Activated CD8-positive, alpha-beta T cell treated with anti-CD3 and anti-CD28 coated beads, Interleukin-2, amount 10 ng/mL, durations not matched to agents 7 days and 5 days (primary cell): ENCODE measurements at regions of chr3 and their contacts with region 1.

Region 1: DNA sequence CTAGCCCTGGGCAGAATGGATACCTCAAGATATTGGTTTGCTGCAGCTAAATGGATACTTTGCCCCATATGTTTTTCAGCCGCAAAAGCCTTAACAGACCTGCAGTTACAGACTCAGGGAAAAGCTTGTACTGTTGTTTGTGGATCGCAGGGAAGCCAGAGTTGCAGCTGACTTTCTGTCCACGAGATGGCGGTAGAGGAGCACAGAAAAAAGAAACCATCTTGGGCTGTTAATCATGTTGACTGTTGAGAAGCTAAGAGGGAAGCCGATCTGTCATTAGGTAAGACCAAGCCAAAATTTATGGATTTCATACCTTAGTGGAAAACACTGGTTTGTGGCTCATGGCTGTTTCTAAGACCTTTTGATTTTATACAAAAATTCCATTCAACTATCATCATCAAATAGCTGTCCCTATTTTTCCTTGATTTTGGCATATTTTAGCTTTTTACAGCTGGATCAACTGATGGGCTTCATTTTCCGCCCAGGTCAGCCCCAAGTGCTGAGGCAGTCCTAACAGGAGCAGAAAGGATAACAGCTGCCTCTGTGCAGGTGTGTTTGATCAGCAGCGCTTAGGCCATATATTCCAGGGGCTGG is 205.7 kb upstream of the ZPLD1 start:
- DNase-seq: peak; percentile 81
- ATAC-seq: peak; percentile 73
- H3K4me3 Mint-ChIP-seq: no peak overlapping the region
- H3K27ac Mint-ChIP-seq: no peak overlapping the region
- H3K4me1 Mint-ChIP-seq: peaks cover 14% of the 10 kb centered on the region
- H3K27me3 Mint-ChIP-seq: peaks cover 18% of the 10 kb centered on the region

Region 2: GRCh38 chr3:101809178-101810021 is 419.8 kb before region 1 on chr3:
- CTCF ChIA-PET with region 1: interaction called, 230 read pairs
- POLR2A ChIA-PET with region 1: interaction called, 4 read pairs
- DNase-seq: peak; percentile 60
- ATAC-seq: peak; percentile 74
- H3K4me3 Mint-ChIP-seq: peak overlapping the region; percentile 16
- H3K27ac Mint-ChIP-seq: peak overlapping the region; percentile 50
- H3K4me1 Mint-ChIP-seq: peaks cover 52% of the 10 kb centered on the region
- H3K27me3 Mint-ChIP-seq: no peaks in the 10 kb centered on the region

Region 3: DNA sequence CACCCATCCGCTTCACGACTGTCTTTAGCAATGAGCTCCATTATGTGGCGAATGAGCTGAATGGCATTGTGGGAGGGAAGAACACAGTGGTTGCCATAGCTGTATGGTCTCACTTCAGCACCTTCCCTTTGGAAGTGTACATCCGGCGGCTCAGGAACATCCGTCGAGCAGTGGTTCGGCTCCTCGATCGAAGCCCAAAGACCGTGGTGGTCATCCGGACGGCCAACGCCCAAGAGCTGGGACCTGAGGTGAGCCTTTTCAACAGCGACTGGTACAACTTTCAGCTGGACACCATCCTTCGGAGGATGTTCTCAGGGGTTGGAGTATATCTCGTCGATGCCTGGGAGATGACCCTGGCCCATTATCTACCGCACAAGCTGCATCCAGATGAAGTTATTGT is 407.7 kb before region 1 on chr3:
- CTCF ChIA-PET with region 1: interaction called, 29 read pairs
- POLR2A ChIA-PET with region 1: interaction called, 3 read pairs
- DNase-seq: no peak
- ATAC-seq: no peak
- H3K4me3 Mint-ChIP-seq: no peak overlapping the region
- H3K27ac Mint-ChIP-seq: no peak overlapping the region
- H3K4me1 Mint-ChIP-seq: peaks cover 13% of the 10 kb centered on the region
- H3K27me3 Mint-ChIP-seq: no peaks in the 10 kb centered on the region

Region 4: GRCh38 chr3:101849051-101849720 is 380.0 kb before region 1 on chr3 and contains the start of gene NFKBIZ:
- CTCF ChIA-PET with region 1: interaction called, 26 read pairs
- POLR2A ChIA-PET with region 1: interaction called, 9 read pairs
- DNase-seq: peak; percentile 94
- ATAC-seq: peak; percentile 84
- H3K4me3 Mint-ChIP-seq: peak within 1 kb of the TSS; percentile 95
- H3K27ac Mint-ChIP-seq: peak within 1 kb of the TSS; percentile 97
- H3K4me1 Mint-ChIP-seq: peaks cover 40% of the 10 kb centered on the region
- H3K27me3 Mint-ChIP-seq: no peaks in the 10 kb centered on the region
- total RNA-seq, gene NFKBIZ: 45.3 to 48.1 TPM

Region 5: GRCh38 chr3:101936419-101937356 is 292.5 kb before region 1 on chr3:
- CTCF ChIA-PET with region 1: interaction called, 12 read pairs
- POLR2A ChIA-PET with region 1: no interaction called
- DNase-seq: no peak
- ATAC-seq: peak; percentile 91
- H3K4me3 Mint-ChIP-seq: peak overlapping the region; percentile 32
- H3K27ac Mint-ChIP-seq: peak overlapping the region; percentile 77
- H3K4me1 Mint-ChIP-seq: peaks cover 38% of the 10 kb centered on the region
- H3K27me3 Mint-ChIP-seq: no peaks in the 10 kb centered on the region

Region 6: GRCh38 chr3:102299125-102299877 is 70.1 kb after region 1 on chr3:
- CTCF ChIA-PET with region 1: no interaction called
- POLR2A ChIA-PET with region 1: no interaction called
- DNase-seq: peak; percentile 30
- ATAC-seq: peak; percentile 51
- H3K4me3 Mint-ChIP-seq: no peak overlapping the region
- H3K27ac Mint-ChIP-seq: peak overlapping the region; percentile 4
- H3K4me1 Mint-ChIP-seq: peaks cover 11% of the 10 kb centered on the region
- H3K27me3 Mint-ChIP-seq: peaks cover 14% of the 10 kb centered on the region

Region 7: DNA sequence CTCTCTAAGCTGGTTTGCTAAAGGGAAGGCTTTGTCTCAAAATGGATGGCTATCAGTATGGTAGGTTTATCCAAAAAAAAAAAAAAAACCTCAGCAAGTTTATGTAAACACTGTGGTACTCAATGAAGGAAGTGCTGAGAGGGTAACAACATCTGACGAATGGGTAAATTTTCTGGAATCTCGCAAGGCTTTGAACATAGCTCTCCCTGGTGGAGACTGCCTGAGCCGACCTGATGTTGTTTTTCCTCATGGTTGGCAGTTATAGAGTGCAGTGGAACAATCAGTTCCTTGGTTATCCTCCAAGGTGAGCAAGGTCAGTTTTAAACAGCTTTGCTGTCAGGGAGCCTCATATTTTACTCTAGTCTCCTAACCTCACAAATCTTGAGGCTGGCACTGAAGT is 300.3 kb after region 1 on chr3:
- CTCF ChIA-PET with region 1: interaction called, 16 read pairs
- POLR2A ChIA-PET with region 1: no interaction called
- DNase-seq: no peak
- ATAC-seq: no peak
- H3K4me3 Mint-ChIP-seq: no peak overlapping the region
- H3K27ac Mint-ChIP-seq: no peak overlapping the region
- H3K4me1 Mint-ChIP-seq: peaks cover 4% of the 10 kb centered on the region
- H3K27me3 Mint-ChIP-seq: peaks cover 3% of the 10 kb centered on the region